Heart right ventricle (tissue), 16 donors: ENCODE measurements at regions of chr22 and their contacts with region 1.

Region 1: GRCh38 chr22:44337678-44338004 is 24.9 kb upstream of the SHISAL1 start:
- DNase-seq: peak in 1 of 2 donors; percentile 36
- ATAC-seq: peak in 7 of 8 donors; percentile 41 to 75 (median 57)
- H3K4me3 ChIP-seq: no peak overlapping the region
- H3K27ac ChIP-seq: no peak overlapping the region
- H3K4me1 ChIP-seq: peaks cover 0 to 25% (median 8%) of the 10 kb centered on the region in 9 donors
- H3K27me3 ChIP-seq: peaks cover 0 to 23% (median 10%) of the 10 kb centered on the region in 7 donors
- CTCF ChIP-seq: no peak

Region 2: GRCh38 chr22:44147821-44148574 is 189.6 kb before region 1 on chr22:
- intact Hi-C with region 1: loop called in 1 of 10 experiments (anchors 10 kb)
- DNase-seq: no peak
- ATAC-seq: no peak
- H3K4me3 ChIP-seq: no peak overlapping the region
- H3K27ac ChIP-seq: no peak overlapping the region
- H3K4me1 ChIP-seq: peaks cover 0 to 22% (median 6%) of the 10 kb centered on the region in 9 donors
- H3K27me3 ChIP-seq: no peaks in the 10 kb centered on the region
- CTCF ChIP-seq: no peak

Region 3: DNA sequence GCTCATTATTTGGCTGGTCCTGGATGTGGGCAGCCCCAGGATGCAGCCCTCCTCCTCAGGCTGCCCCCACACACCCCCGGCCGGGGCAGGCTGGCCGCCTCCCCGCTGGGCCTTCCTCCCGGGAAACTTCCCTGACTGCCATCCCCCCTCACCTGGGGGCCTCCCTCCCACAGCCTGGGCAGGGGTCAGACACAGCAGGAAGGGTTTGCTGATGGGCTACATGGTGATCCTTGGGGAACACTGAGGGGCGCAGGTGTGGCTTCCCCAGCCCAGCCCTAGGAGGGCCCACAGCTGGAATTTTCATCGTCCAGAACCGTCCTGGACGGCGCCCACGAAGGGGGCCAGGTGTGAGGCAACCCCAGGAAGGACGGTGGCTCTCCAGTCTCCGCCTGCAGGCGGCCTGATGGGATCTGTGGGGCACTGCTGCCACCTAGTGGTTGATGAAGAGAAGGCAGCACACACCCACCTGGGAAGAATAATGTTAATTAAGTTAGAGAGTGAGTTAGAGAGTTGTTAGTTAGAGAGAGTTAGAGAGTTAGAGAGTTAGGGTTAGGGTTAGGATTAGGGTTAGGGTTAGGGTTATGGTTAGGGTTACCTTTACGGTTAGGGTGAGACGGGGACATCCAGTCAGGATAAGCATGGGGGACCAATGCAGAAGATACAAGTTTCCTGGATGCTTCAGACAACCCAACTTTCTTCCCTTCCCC is 288.5 kb after region 1 on chr22:
- intact Hi-C with region 1: loop called in 3 of 10 experiments (anchors 10 kb)
- DNase-seq: peak; percentile 63 to 76
- ATAC-seq: peak; percentile 58 to 85 (median 70)
- H3K4me3 ChIP-seq: no peak overlapping the region
- H3K27ac ChIP-seq: no peak overlapping the region
- H3K4me1 ChIP-seq: peaks cover 0 to 5% (median 0%) of the 10 kb centered on the region in 9 donors
- H3K27me3 ChIP-seq: peaks cover 0 to 23% (median 5%) of the 10 kb centered on the region in 7 donors
- CTCF ChIP-seq: peak; percentile 94 to 98 (median 97)